Right cardiac atrium (tissue), 5 donors: ENCODE measurements at regions of chr17 and their contacts with region 1.

Region 1: GRCh38 chr17:42388381-42389134 is at the start of gene STAT3:
- DNase-seq: peak; percentile 100
- ATAC-seq: peak; percentile 98
- H3K4me3 ChIP-seq: peak within 1 kb of the TSS; percentile 81
- H3K27ac ChIP-seq: peak within 1 kb of the TSS; percentile 98
- H3K4me1 ChIP-seq: peaks cover 2% of the 10 kb centered on the region
- H3K27me3 ChIP-seq: no peaks in the 10 kb centered on the region
- total RNA-seq, gene STAT3: 100 to 192 (median 105) TPM

Region 2: DNA sequence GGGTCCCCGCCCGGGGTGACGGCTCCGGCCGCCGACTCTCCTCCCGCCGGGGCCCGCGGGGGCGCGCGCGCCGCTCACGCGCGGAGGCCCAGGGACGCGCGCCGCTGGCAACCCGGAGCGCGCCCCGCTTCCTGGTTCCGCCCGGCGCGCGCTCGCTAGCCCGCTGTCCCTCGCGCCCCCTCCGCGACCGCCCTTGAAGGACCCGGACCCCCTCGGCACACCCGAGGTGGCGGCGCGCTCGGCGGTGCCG is 112.3 kb before region 1 on chr17 and contains the start of gene STAT5B:
- intact Hi-C with region 1: no loop called
- DNase-seq: peak; percentile 77 to 92 (median 91)
- ATAC-seq: peak; percentile 82 to 90
- H3K4me3 ChIP-seq: peak within 1 kb of the TSS; percentile 100
- H3K27ac ChIP-seq: peak within 1 kb of the TSS; percentile 80
- H3K4me1 ChIP-seq: no peaks in the 10 kb centered on the region
- H3K27me3 ChIP-seq: no peaks in the 10 kb centered on the region
- total RNA-seq, gene STAT5B: 39.4 to 46.3 (median 40.5) TPM

Region 3: GRCh38 chr17:42347198-42347597 is 41.4 kb before region 1 on chr17:
- intact Hi-C with region 1: loop called in 1 of 4 experiments (anchors 5 kb)
- DNase-seq: peak in 1 of 3 donors; percentile 36
- ATAC-seq: peak; percentile 47 to 77
- H3K4me3 ChIP-seq: no peak overlapping the region
- H3K27ac ChIP-seq: no peak overlapping the region
- H3K4me1 ChIP-seq: peaks cover 8% of the 10 kb centered on the region
- H3K27me3 ChIP-seq: no peaks in the 10 kb centered on the region

Region 4: GRCh38 chr17:42744806-42745617 is 356.5 kb after region 1 on chr17 and contains the start of gene EZH1:
- intact Hi-C with region 1: no loop called
- DNase-seq: peak; percentile 91 to 97 (median 96)
- ATAC-seq: peak; percentile 97 to 98
- H3K4me3 ChIP-seq: peak within 1 kb of the TSS; percentile 85
- H3K27ac ChIP-seq: peak within 1 kb of the TSS; percentile 97
- H3K4me1 ChIP-seq: peaks cover 11% of the 10 kb centered on the region
- H3K27me3 ChIP-seq: no peaks in the 10 kb centered on the region
- total RNA-seq, gene EZH1: 32.4 to 53.2 (median 43.6) TPM